RWPE1 (cell line): ENCODE measurements at regions of chr2 and their contacts with region 1.

Region 1: DNA sequence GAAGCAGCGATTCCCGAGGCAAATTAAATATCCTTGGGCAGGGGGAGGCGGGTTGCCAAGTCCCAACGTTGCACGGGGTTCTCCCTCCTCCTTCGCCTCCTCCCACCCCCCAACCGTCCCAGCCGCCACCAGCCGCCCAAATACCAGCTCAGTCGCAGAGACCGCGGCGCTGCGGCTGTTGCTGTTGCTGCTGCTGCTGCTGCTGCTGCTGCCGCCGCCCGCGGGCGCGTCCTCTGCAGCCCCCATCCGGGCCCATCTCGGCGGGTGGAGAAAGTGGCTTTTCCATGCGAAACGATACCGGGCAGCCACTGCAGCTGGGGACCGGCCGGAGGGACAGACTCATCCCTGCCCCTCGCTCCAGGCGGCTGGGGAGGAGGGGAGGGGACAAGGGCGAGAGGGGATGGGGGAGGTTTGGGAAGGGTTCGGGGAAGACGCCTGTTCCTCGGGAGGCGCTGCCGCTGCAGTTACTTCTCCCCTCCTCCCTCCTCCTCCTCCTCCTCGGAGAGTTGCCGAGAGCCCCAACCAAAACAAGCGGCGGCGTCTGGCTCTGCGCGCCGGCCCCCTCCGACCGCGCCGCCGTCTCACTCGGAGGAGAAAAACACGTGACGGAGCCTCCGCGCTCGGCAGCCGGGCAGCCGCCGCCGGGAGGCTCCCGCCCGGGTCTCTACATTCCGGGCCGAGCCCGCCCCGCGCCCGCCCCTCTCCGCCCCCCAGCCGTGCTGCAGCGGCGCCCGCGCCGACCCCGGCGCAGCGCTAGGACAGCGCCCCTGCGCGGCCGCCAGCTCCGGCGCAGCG is at the start of gene IRS1:
- DNase-seq: peak; percentile 62
- H3K27ac ChIP-seq: peak within 1 kb of the TSS; percentile 92
- CTCF ChIP-seq: peak; percentile 81; the same call in 1 of the 2 replicates

Region 2: GRCh38 chr2:225668606-225669266 is 1130.6 kb before region 1 on chr2:
- CTCF ChIA-PET with region 1: interaction called, 10 read pairs
- POLR2A ChIA-PET with region 1: no interaction called
- DNase-seq: peak; percentile 54
- H3K27ac ChIP-seq: no peak overlapping the region
- CTCF ChIP-seq: peak; percentile 79